ENCODE measurements at regions of chr3 and their contacts with region 1.

Region 1: GRCh38 chr3:10344147-10344943 is 23.4 kb upstream of the SEC13 start:
- DNase-seq: peak; percentile 56 to 63
- ATAC-seq: peak; percentile 22 to 76; a peak in 4 of 6 replicates
- H3K4me3 ChIP-seq: no peak overlapping the region
- H3K27ac ChIP-seq: no peak overlapping the region
- H3K4me1 ChIP-seq: no peaks in the 10 kb centered on the region
- CTCF ChIP-seq: peak; percentile 87
- EP300 ChIP-seq: no peak
- POLR2A ChIP-seq: no peak
- RAD21 ChIP-seq: peak; percentile 81

Region 2: GRCh38 chr3:10322352-10322710 is 22.0 kb before region 1 on chr3:
- CTCF ChIA-PET with region 1: interaction called, 13 read pairs
- POLR2A ChIA-PET with region 1: no interaction called
- DNase-seq: peak; percentile 28 to 41
- ATAC-seq: peak; percentile 26 to 60; a peak in 3 of 6 replicates
- H3K4me3 ChIP-seq: no peak overlapping the region
- H3K27ac ChIP-seq: no peak overlapping the region
- H3K4me1 ChIP-seq: peaks cover 5% of the 10 kb centered on the region; the same call in 2 of the 3 replicates
- CTCF ChIP-seq: no peak; the same call in 2 of the 3 replicates
- EP300 ChIP-seq: no peak
- POLR2A ChIP-seq: no peak
- RAD21 ChIP-seq: peak in 1 of 2 experiments; percentile 47; a peak in 2 of 5 replicates

Region 3: GRCh38 chr3:10357592-10358308 is 13.4 kb after region 1 on chr3:
- CTCF ChIA-PET with region 1: interaction called, 42 read pairs
- POLR2A ChIA-PET with region 1: no interaction called
- DNase-seq: peak in 1 of 2 experiments; percentile 44
- ATAC-seq: peak; percentile 60 to 61
- H3K4me3 ChIP-seq: no peak overlapping the region
- H3K27ac ChIP-seq: peak overlapping the region; percentile 30 to 32; a peak in 3 of 6 replicates
- H3K4me1 ChIP-seq: peaks cover 22% of the 10 kb centered on the region
- CTCF ChIP-seq: no peak
- EP300 ChIP-seq: no peak
- POLR2A ChIP-seq: no peak
- RAD21 ChIP-seq: no peak

Region 4: GRCh38 chr3:10366651-10367101 is 22.3 kb after region 1 on chr3:
- CTCF ChIA-PET with region 1: interaction called, 21 read pairs
- POLR2A ChIA-PET with region 1: no interaction called
- DNase-seq: peak; percentile 57 to 67
- ATAC-seq: peak; percentile 78 to 88
- H3K4me3 ChIP-seq: no peak overlapping the region
- H3K27ac ChIP-seq: peak overlapping the region in 1 of 2 experiments; percentile 58; a peak in 3 of 6 replicates
- H3K4me1 ChIP-seq: peaks cover 15% of the 10 kb centered on the region; the same call in 1 of the 3 replicates
- CTCF ChIP-seq: no peak
- EP300 ChIP-seq: no peak
- POLR2A ChIP-seq: no peak
- RAD21 ChIP-seq: no peak

Region 5: DNA sequence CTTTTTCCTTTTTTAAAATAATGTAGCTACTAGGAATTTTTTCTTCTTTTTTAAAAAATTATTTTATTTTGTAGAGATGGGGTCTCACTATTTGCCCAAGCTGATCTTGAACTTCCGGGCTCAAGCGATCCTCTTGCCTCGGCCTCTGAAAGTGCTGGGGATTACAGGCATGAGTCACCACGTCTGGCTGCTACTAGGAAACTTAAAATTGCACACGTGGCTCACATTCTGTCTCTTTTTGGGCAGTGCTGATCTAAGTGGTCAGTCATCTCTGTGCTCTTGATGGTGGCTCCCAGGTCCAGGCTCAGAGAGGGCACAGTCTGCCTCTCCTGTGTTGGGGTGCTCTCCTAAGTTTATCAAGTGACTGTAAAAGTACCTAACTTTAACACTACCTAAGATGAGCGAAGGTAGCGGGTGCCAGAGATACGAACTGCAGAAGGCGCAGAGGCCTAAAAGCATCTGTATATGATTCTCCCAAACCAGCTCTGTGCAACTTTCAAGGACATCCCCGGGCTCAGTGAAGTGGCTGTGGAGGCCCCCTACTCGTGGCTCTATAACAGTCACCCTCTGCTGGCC is 29.4 kb after region 1 on chr3:
- CTCF ChIA-PET with region 1: interaction called, 19 read pairs
- POLR2A ChIA-PET with region 1: no interaction called
- DNase-seq: peak in 1 of 2 experiments; percentile 15
- ATAC-seq: peak in 1 of 2 experiments; percentile 48; a peak in 3 of 6 replicates
- H3K4me3 ChIP-seq: no peak overlapping the region
- H3K27ac ChIP-seq: no peak overlapping the region
- H3K4me1 ChIP-seq: peaks cover 5% of the 10 kb centered on the region; the same call in 1 of the 3 replicates
- CTCF ChIP-seq: no peak
- EP300 ChIP-seq: no peak
- POLR2A ChIP-seq: no peak
- RAD21 ChIP-seq: no peak

Region 6: GRCh38 chr3:10400749-10401495 is 56.6 kb after region 1 on chr3:
- CTCF ChIA-PET with region 1: interaction called, 15 read pairs
- POLR2A ChIA-PET with region 1: no interaction called
- DNase-seq: no peak
- ATAC-seq: no peak
- H3K4me3 ChIP-seq: no peak overlapping the region
- H3K27ac ChIP-seq: no peak overlapping the region
- H3K4me1 ChIP-seq: no peaks in the 10 kb centered on the region
- CTCF ChIP-seq: no peak
- EP300 ChIP-seq: no peak
- POLR2A ChIP-seq: no peak
- RAD21 ChIP-seq: no peak

Region 7: GRCh38 chr3:10738688-10739372 is 394.5 kb after region 1 on chr3:
- CTCF ChIA-PET with region 1: interaction called, 121 read pairs
- POLR2A ChIA-PET with region 1: no interaction called
- DNase-seq: peak; percentile 61 to 77
- ATAC-seq: peak; percentile 91 to 96
- H3K4me3 ChIP-seq: peak overlapping the region; percentile 30
- H3K27ac ChIP-seq: peak overlapping the region in 1 of 2 experiments; percentile 65; a peak in 2 of 6 replicates
- H3K4me1 ChIP-seq: no peaks in the 10 kb centered on the region
- CTCF ChIP-seq: peak; percentile 89
- EP300 ChIP-seq: no peak
- POLR2A ChIP-seq: no peak
- RAD21 ChIP-seq: peak; percentile 68 to 76

Measured in A549 (cell line).